Panc1 (cell line): ENCODE measurements at regions of chr3 and their contacts with region 1.

Region 1: DNA sequence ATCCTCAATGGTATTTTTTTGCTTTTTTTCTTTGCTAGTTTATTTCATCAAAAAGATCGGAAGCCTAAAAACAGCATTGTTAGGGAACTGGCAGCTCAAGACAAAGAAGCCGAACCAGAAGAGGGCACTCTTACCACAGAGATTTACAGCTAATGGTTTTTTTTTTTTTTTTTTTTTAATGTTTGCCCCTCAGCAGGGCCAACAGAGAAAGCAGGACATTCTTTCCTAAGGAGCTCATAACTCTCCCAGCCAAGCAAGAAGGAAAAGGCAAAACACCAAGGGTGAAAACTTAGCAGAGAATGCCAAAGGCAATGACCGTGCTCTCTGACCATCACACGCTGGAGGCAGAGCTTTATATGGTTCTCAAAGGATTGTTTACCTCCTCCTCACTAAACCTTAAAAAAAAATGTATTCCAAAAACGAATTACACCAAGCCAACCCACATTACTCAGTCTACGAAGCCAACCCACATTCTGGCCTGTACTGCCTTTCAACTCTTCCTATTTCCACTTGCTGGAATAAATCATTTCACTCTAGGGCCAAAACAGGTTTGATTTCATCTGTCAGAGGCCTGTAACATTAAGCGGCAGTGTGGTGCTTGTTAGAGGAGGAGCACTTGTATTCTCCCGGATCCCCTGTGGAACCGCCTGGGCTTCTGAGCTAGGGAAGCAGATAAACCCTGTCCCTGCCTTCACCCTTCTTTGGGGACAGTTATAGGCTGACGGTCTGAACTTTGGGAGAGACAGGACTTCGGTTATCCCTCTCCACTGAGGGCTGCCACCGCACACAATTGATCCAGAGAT is 35.6 kb upstream of the GYG1 start:
- DNase-seq: no peak
- ATAC-seq: peak; percentile 75
- H3K4me3 ChIP-seq: no peak overlapping the region
- H3K27ac ChIP-seq: peak overlapping the region; percentile 57; the same call in 1 of the 2 replicates
- H3K4me1 ChIP-seq: peaks cover 6% of the 10 kb centered on the region
- H3K27me3 ChIP-seq: no peaks in the 10 kb centered on the region
- CTCF ChIP-seq: peak; percentile 85

Region 2: GRCh38 chr3:149120051-149120972 is 164.6 kb after region 1 on chr3:
- CTCF ChIA-PET with region 1: interaction called, 4 read pairs
- POLR2A ChIA-PET with region 1: no interaction called
- in situ Hi-C with region 1: no loop called
- intact Hi-C with region 1: loop called (anchors 5 kb)
- DNase-seq: peak; percentile 76
- ATAC-seq: peak; percentile 87
- H3K4me3 ChIP-seq: no peak overlapping the region
- H3K27ac ChIP-seq: peak overlapping the region; percentile 79
- H3K4me1 ChIP-seq: peaks cover 4% of the 10 kb centered on the region
- H3K27me3 ChIP-seq: no peaks in the 10 kb centered on the region
- CTCF ChIP-seq: peak; percentile 75

Region 3: DNA sequence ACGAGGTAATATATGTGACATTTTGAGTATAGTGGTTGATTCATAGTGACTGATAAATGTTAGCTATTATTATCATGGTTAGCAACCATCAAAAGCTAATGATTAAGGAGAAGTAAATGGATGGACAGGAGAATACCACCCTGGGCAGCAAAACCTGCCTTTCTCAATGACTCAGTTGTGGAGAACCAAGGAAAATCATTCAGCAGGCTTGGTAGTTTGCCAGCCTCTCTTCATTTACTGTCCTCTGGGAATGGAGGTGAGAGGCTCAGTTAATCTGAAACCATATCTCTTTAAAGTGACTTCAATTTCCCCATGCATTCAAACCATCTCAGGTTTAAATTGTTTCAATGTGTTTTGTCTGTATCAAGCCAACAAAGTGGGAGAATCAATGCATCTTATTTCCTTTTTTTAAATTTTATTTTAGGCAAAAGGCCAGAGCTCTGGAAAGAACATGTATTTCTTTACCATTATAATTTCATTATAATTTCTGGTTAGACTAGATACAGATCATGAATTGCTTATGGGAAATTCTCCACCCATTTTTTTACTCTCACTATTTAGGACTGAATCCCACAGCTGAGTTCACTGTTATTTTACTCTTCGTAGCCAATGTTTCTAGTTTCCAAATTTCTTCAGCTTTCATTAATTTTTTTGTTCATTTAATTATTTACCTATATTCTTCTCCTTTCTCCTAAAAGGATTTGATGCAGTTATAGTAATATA is 375.0 kb after region 1 on chr3:
- CTCF ChIA-PET with region 1: interaction called, 8 read pairs
- POLR2A ChIA-PET with region 1: interaction called, 3 read pairs
- in situ Hi-C with region 1: no loop called
- intact Hi-C with region 1: loop called (anchors 5 kb)
- DNase-seq: no peak
- ATAC-seq: no peak
- H3K4me3 ChIP-seq: no peak overlapping the region
- H3K27ac ChIP-seq: peak overlapping the region; percentile 100
- H3K4me1 ChIP-seq: peaks cover 45% of the 10 kb centered on the region
- H3K27me3 ChIP-seq: no peaks in the 10 kb centered on the region
- CTCF ChIP-seq: no peak

Region 4: GRCh38 chr3:149480325-149481017 is 524.7 kb after region 1 on chr3:
- CTCF ChIA-PET with region 1: no interaction called
- POLR2A ChIA-PET with region 1: no interaction called
- in situ Hi-C with region 1: no loop called
- intact Hi-C with region 1: loop called (anchors 10 kb)
- DNase-seq: peak; percentile 92
- ATAC-seq: peak; percentile 96
- H3K4me3 ChIP-seq: no peak overlapping the region; a peak in 1 of 4 replicates
- H3K27ac ChIP-seq: peak overlapping the region; percentile 96
- H3K4me1 ChIP-seq: peaks cover 21% of the 10 kb centered on the region
- H3K27me3 ChIP-seq: no peaks in the 10 kb centered on the region
- CTCF ChIP-seq: peak; percentile 98